ENCODE measurements at regions of chr7 and their contacts with region 1.

Region 1: DNA sequence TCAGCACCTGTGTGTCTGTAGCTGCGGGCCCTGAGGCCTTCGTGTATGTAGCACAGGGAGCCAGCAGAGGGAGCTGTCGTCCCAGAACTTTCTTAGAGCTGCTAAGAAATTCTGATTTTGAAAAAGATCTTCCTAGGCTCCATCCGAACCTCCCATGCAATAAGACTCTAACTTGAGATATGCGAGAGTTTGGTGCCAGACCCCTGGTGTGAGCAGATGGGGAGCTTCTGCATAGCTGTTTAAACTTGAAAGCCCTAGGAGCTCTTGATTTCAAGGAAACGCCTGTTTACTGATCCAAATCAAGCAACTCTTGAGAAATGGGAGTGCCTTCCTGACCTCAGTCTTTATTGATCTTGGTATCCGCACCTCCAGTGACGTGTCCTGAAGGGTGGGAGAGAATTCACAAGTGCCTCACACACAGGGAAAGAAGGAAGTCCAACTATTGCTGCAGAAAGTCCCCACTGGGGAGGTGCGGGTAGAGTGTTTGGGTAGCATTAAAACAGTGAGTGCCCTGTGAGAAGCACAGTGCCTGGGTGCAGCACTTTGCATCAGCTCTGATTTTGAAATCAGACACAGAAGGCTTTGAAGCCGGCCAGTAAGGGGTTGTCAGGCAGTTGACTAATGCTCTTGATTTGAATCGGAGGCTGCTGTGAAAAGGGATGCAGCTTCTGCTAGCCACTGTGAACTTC is 66.4 kb upstream of the STRIP2 start:
- DNase-seq: peak; percentile 87
- H3K4me3 Mint-ChIP-seq: peak overlapping the region; percentile 51
- H3K27ac Mint-ChIP-seq: peak overlapping the region; percentile 85
- H3K4me1 Mint-ChIP-seq: peaks cover 32% of the 10 kb centered on the region
- H3K27me3 Mint-ChIP-seq: no peaks in the 10 kb centered on the region

Region 2: GRCh38 chr7:129218514-129219062 is 149.3 kb before region 1 on chr7:
- CTCF ChIA-PET with region 1: interaction called, 17 read pairs
- DNase-seq: peak; percentile 87
- H3K4me3 Mint-ChIP-seq: no peak overlapping the region
- H3K27ac Mint-ChIP-seq: no peak overlapping the region
- H3K4me1 Mint-ChIP-seq: peaks cover 14% of the 10 kb centered on the region
- H3K27me3 Mint-ChIP-seq: peaks cover 7% of the 10 kb centered on the region

Region 3: DNA sequence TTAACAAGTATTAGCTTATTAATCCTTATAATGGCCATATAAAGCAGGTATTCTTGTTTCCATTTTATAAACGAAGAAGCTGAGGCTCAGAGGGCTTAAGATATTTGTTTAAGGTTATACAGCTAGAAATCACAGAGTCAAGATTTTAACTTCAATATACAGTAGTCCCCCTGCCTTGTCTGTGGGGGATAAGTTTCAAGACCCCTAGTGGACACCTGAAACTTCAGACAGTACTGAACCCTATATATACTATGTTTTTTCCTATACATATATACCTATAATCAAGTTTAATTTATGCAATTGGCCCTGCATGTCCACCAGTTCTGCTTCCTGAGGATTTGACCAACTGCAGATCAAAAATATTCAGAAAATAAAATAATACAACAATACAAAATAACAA is 22.0 kb after region 1 on chr7:
- CTCF ChIA-PET with region 1: interaction called, 29 read pairs
- DNase-seq: no peak
- H3K4me3 Mint-ChIP-seq: no peak overlapping the region
- H3K27ac Mint-ChIP-seq: no peak overlapping the region
- H3K4me1 Mint-ChIP-seq: peaks cover 13% of the 10 kb centered on the region
- H3K27me3 Mint-ChIP-seq: no peaks in the 10 kb centered on the region

Region 4: GRCh38 chr7:129433847-129434674 is 66.2 kb after region 1 on chr7 and contains the start of gene STRIP2:
- CTCF ChIA-PET with region 1: interaction called, 16 read pairs
- DNase-seq: peak; percentile 96
- H3K4me3 Mint-ChIP-seq: peak within 1 kb of the TSS; percentile 85
- H3K27ac Mint-ChIP-seq: peak within 1 kb of the TSS; percentile 81
- H3K4me1 Mint-ChIP-seq: peaks cover 37% of the 10 kb centered on the region
- H3K27me3 Mint-ChIP-seq: peaks cover 6% of the 10 kb centered on the region

Region 5: GRCh38 chr7:129611246-129612111 is 243.6 kb after region 1 on chr7 and contains the start of gene NRF1:
- CTCF ChIA-PET with region 1: interaction called, 20 read pairs
- DNase-seq: peak; percentile 92
- H3K4me3 Mint-ChIP-seq: peak within 1 kb of the TSS; percentile 98
- H3K27ac Mint-ChIP-seq: peak within 1 kb of the TSS; percentile 96
- H3K4me1 Mint-ChIP-seq: peaks cover 63% of the 10 kb centered on the region
- H3K27me3 Mint-ChIP-seq: no peaks in the 10 kb centered on the region

Measured in activated naive CD4-positive, alpha-beta T cell treated with anti-CD3 and anti-CD28 coated beads, Interleukin-2, amount 10 ng/mL, durations not matched to agents 7 days and 5 days (primary cell).